ENCODE measurements at regions of chr5 and their contacts with region 1.

Region 1: GRCh38 chr5:180071531-180072255 is at the start of gene RNF130:
- DNase-seq: peak; percentile 98
- ATAC-seq: peak; percentile 97
- total RNA-seq, gene RNF130: 51.2 TPM

Region 2: DNA sequence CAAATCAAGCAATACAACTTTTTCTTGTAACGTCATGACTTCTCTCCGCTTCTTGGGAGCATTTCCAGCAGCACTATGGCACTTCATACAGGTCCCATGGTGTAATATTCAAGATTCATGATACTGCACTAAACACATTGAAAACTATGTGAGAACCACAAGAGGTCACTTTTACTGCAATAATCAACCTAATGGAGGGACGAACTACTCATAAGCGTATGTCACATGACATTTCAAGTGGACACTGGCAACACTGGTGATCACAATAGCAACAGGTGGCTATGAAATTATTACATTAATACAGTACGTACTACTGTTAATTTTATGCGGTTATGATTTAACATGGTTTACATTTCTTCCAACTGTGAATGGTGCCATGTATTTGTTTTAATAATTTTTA is 85.4 kb before region 1 on chr5:
- intact Hi-C with region 1: loop called (anchors 5 kb)
- DNase-seq: no peak
- ATAC-seq: peak; percentile 76

Region 3: GRCh38 chr5:180007582-180007981 is 64.1 kb before region 1 on chr5:
- intact Hi-C with region 1: loop called (anchors 5 kb)
- DNase-seq: no peak
- ATAC-seq: peak; percentile 89

Region 4: DNA sequence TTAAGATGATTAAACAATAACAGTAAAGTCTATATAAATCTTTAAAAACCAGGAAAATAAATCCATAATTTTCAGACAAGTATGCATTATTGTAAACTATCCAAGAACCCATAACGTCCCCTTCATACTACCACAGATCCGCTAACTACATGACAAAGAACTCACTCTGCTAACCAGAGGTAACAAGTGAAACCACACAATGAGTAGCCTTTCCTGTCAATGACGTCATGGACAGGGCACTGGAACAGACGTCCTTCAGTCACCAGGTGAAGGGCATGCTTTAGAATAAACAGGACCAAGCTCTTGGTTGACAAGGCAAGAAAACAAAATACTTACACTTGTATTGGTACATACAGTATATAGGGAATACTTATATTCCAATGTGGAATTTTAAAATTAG is 45.4 kb before region 1 on chr5:
- intact Hi-C with region 1: loop called (anchors 2 kb)
- DNase-seq: no peak
- ATAC-seq: peak; percentile 73

Measured in Right ventricle myocardium inferior (tissue), 1 donor.